T-cell (primary cell): ENCODE measurements at regions of chr1 and their contacts with region 1.

Region 1: DNA sequence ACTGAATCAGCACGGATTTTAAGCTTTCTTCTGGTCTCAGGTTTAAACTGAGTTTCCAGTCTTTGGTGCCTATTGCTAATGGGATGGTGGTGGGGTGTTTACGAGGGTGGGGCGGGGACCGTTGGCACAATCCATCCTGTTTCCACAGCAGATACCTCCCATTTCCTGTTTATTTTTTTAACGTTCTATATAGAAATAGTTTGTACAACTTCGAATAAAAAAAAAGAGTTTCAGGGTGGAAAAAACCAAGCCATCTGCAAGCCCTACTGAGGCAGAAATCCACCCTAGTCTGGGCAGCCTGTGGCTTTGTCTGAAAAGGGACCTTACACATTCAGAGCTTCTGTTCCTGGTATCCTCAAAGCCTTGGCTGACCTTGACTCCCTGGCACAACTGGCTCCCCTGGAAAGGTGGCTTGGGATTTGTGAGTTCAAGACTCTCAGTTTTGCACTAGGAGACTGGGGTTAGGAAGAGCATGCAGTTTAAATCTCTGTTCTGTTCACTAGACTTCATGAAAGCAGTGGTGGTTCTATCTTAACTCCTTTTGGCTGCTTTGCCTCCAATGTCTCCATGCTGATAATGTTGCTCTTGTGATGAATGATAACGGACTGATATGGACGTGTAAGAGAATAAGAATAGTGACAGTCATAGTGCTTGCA is 46.7 kb downstream of the VANGL2 start:
- DNase-seq: no peak
- ATAC-seq: peak in 2 of 4 experiments; percentile 36 to 37
- H3K4me3 ChIP-seq: no peak overlapping the region
- H3K4me3 Mint-ChIP-seq: peak overlapping the region; percentile 0 to 50 (median 4)
- H3K27ac ChIP-seq: peak overlapping the region; percentile 40
- H3K27ac Mint-ChIP-seq: peak overlapping the region; percentile 69 to 84
- H3K4me1 ChIP-seq: peaks cover 2 to 14% of the 10 kb centered on the region in 2 experiments
- H3K4me1 Mint-ChIP-seq: peaks cover 59 to 72% (median 63%) of the 10 kb centered on the region in 3 donors
- H3K27me3 ChIP-seq: no peaks in the 10 kb centered on the region
- H3K27me3 Mint-ChIP-seq: no peaks in the 10 kb centered on the region

Region 2: GRCh38 chr1:160519642-160520435 is 72.8 kb after region 1 on chr1:
- CTCF ChIA-PET with region 1: interaction called in 1 of 2 experiments, 4 read pairs
- POLR2A ChIA-PET with region 1: interaction called in 1 of 2 experiments, 11 read pairs
- DNase-seq: peak in 14 of 35 experiments; percentile 14 to 68 (median 24)
- ATAC-seq: peak; percentile 22 to 65 (median 47)
- H3K4me3 ChIP-seq: peak overlapping the region; percentile 18 to 69
- H3K4me3 Mint-ChIP-seq: peak overlapping the region; percentile 84 to 98 (median 93)
- H3K27ac ChIP-seq: peak overlapping the region; percentile 65
- H3K27ac Mint-ChIP-seq: peak overlapping the region; percentile 94 to 97
- H3K4me1 ChIP-seq: peaks cover 24 to 37% of the 10 kb centered on the region in 2 experiments
- H3K4me1 Mint-ChIP-seq: peaks cover 93 to 94% (median 94%) of the 10 kb centered on the region in 3 donors
- H3K27me3 ChIP-seq: no peaks in the 10 kb centered on the region
- H3K27me3 Mint-ChIP-seq: no peaks in the 10 kb centered on the region

Region 3: DNA sequence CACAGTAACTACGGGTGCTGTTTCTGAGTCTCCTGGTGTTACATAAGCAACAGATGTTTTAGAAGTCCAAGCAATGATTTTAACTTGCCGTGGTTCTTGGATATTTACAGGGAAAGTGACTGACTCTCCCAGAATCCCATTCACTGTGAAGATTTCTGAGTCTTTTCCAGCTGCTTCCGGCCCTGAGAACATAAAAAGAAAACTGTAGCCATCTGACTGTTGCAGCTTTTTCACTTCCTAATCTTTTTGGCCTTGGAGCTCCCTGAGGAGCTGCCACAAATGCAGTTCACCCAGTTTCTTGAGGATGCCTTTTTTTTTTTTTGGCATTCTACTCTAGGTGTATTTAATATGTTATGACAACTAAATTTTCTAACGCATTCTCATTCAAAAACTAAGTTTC is 118.5 kb after region 1 on chr1:
- CTCF ChIA-PET with region 1: no interaction called
- POLR2A ChIA-PET with region 1: interaction called in 1 of 2 experiments, 12 read pairs
- DNase-seq: no peak
- ATAC-seq: no peak
- H3K4me3 ChIP-seq: no peak overlapping the region
- H3K4me3 Mint-ChIP-seq: peak overlapping the region in 1 of 3 donors; percentile 77
- H3K27ac ChIP-seq: peak overlapping the region; percentile 87
- H3K27ac Mint-ChIP-seq: peak overlapping the region; percentile 98
- H3K4me1 ChIP-seq: peaks cover 52 to 62% of the 10 kb centered on the region in 2 experiments
- H3K4me1 Mint-ChIP-seq: peaks cover 82 to 97% (median 95%) of the 10 kb centered on the region in 3 donors
- H3K27me3 ChIP-seq: no peaks in the 10 kb centered on the region
- H3K27me3 Mint-ChIP-seq: no peaks in the 10 kb centered on the region